ENCODE measurements at regions of chr16 and their contacts with region 1.

Region 1: DNA sequence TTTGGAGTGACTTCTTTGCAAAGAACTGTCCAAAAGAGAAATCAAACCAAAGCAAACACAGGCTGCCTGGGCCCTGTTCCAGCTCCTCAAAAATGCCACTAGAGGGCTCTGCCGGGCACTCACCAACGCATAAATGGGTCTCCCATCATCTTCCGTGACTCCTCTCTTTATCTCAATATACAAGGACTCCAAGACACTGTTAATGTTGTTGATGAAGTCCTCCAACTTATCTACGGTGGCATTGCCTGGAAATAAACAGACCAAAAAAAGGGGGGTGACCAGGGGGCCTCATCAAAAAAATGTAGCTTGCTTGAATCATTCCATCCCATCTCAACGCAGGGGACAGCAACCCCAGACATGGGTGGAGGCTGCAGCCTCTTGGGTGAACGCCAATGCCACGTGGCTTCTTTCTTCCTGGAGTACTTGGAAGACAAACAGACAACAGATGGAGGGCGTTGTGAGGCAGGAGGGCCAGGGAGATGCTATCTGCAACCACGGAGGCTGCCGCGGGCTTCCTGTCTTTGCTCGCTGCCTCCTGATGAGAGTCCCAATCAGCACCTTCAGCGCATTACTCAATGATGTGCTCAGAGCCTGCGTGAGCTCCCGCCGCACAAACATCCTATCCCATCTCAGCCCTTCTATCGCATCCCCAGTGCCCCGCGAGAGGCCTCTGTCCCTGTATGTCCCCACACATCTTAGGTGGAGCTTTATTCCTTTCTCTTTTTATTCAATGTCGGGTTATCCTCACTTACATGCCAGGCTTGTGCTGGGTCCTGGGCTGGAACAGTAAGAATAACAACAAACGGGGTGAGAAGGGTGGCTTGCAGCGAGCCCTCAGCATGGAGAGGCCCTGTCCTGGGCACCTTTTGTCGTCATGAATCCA is 32.0 kb downstream of the KDM8 start:
- DNase-seq: peak; percentile 94

Region 2: GRCh38 chr16:27127308-27127707 is 108.0 kb before region 1 on chr16:
- intact Hi-C with region 1: no loop called
- DNase-seq: no peak

Region 3: GRCh38 chr16:27179500-27180072 is 55.7 kb before region 1 on chr16:
- intact Hi-C with region 1: loop called (anchors 2 kb)
- DNase-seq: peak; percentile 91

Region 4: DNA sequence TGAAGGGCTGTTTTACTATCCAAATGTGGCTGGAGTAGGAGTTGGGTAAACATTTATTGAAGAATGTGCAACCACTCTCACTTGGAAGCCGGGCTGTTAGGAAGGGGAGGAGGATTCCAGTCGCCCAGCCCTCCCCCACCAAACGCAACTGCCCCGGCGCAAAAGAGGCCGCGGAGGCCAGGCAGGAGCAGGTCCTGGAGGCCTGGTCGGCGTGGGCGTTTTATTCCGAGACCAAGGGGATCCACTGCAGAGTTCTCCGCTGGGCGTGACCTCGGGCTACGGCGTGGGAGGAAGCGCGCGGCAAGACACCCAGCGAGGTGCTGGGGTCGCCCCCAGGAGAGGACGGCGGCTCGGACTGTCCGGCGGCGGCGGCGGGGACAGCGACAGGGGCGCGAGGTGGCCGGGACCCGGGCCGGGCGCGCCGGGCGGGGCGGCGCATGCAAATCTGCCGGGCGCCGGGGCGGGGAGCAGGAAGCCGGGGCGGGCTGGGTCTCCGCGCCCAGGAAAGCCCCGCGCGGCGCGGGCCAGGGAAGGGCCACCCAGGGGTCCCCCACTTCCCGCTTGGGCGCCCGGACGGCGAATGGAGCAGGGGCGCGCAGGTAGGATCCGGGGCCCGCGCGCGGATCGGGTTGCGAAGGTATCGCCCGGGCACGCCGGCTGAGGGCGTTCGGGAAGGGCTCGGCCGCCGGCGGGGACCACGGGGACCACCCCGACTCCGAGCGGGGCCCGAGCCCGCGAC is 78.3 kb after region 1 on chr16 and contains the start of gene IL4R:
- intact Hi-C with region 1: loop called (anchors 5 kb)
- DNase-seq: peak; percentile 90
- total RNA-seq, gene IL4R: 22.0 TPM

Region 5: DNA sequence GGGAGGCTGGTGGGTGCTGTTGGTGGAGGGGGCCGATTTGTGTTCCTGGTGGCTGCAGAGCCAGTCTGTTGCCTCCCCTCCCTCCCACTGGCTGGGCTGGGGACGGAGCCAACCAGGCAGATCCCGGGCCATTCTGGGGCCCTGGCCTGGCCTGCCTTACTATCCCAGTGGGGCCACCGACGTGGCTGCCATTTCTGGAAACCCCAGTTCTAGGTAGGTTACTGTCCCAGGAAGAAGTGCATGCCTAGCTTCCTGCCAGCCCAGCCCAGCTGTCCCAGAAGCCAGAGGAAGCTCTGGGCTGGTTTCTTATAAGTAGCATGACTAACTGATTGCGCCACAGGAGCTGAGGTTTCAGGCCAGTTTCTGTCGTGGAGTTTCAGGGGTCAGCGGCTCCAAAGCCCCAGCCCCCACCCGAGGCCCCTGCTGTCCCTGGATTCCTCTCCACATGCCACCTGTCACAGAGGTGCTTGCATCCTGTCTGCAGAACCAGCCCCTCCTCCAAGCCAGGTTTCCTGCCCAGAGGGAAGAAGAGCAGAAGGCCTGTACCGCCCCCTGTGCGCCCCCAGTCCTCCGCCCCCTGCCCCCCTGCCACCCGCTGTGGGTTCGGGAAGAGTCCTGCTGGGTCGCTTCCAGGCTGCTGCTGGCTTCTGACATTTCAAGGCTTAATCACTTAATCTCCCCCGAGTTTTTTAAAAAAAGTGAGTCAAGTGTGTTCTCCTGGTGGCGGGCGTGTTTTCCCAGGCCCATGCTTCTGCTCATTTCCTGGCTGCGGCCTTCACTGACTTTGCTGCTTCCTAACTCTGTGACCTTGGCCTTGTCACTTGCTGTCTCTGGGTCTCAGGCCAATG is 91.7 kb after region 1 on chr16:
- intact Hi-C with region 1: loop called (anchors 5 kb)
- DNase-seq: peak; percentile 90

Region 6: DNA sequence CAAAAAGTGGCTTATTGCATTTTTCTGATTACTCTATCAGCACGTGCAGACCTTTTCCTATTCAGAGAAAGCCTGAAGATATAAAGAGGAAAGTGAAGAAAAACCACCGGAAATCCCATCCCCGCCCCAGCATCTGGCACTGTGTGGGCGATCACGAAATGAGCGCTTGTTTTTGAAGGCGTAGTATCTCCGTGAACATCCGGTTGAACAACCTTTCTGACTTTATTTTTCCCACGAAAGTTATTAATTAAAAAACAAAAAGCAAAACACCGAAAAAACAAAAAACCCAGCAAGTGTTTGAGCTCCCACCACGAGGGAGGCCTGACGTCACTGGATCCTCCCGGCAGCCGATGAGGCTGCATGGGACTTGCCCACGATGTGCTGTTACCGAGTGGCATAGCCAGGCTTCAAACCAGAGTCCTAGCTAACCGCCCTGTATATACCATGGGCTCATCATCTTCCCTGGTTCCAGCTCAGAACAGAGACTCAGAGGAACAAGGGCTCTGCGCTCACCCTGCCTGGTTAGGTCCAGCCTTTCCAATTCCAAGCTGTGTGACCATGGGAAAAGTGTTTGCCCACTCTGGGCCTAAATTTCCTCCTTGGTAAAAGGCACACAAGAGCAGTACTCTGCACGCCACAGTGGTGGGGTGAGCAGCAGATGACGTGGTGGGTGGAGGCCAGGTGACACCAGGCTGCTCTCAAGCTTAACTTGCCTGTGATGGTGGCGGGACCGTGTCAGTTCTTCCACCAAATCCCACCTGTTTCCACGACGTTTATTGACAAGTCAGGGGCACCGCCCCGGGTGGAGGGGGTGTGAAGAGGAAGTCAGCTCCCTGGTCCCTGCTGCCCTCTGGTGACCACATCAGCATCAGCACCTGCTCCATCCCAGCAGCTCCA is 132.4 kb after region 1 on chr16:
- intact Hi-C with region 1: loop called (anchors 2 kb)
- DNase-seq: peak; percentile 88

Region 7: DNA sequence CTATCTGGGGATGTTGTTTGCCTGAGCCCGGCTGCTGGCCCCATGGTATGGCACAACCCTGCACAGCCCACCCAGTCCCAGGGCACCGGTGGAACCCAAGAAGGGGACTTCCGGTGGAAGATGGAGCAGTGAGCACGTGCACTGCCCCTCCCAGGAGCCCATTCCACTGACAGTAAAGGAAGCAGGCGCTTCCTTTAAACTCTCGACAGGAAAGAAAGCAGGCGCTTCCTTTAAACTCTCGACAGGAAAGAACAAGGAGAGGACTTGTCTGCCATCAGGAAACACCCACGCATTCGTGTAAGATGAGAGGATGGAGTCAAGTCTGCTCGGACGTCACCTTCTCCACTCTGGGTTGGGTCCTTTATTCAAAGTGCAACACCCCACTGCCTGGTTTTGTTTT is 220.4 kb after region 1 on chr16:
- intact Hi-C with region 1: loop called (anchors 5 kb)
- DNase-seq: no peak

Measured in cardiac septum (tissue), 1 donor.